CD4-positive, alpha-beta T cell (primary cell): ENCODE measurements at regions of chr18 and their contacts with region 1.

Region 1: GRCh38 chr18:49486953-49487710 is at the start of gene C18orf32:
- DNase-seq: peak; percentile 85 to 96 (median 92)
- ATAC-seq: peak; percentile 87
- H3K4me3 ChIP-seq: peak within 1 kb of the TSS; percentile 89
- H3K4me3 Mint-ChIP-seq: peak within 1 kb of the TSS; percentile 96
- H3K27ac ChIP-seq: peak within 1 kb of the TSS; percentile 84 to 89
- H3K27ac Mint-ChIP-seq: peak within 1 kb of the TSS; percentile 93
- H3K4me1 ChIP-seq: peaks cover 51% of the 10 kb centered on the region
- H3K4me1 Mint-ChIP-seq: peaks cover 66% of the 10 kb centered on the region
- H3K27me3 ChIP-seq: no peaks in the 10 kb centered on the region
- H3K27me3 Mint-ChIP-seq: no peaks in the 10 kb centered on the region
- CTCF ChIP-seq: no peak
- total RNA-seq, gene C18orf32: 38.2 to 40.1 TPM

Region 2: DNA sequence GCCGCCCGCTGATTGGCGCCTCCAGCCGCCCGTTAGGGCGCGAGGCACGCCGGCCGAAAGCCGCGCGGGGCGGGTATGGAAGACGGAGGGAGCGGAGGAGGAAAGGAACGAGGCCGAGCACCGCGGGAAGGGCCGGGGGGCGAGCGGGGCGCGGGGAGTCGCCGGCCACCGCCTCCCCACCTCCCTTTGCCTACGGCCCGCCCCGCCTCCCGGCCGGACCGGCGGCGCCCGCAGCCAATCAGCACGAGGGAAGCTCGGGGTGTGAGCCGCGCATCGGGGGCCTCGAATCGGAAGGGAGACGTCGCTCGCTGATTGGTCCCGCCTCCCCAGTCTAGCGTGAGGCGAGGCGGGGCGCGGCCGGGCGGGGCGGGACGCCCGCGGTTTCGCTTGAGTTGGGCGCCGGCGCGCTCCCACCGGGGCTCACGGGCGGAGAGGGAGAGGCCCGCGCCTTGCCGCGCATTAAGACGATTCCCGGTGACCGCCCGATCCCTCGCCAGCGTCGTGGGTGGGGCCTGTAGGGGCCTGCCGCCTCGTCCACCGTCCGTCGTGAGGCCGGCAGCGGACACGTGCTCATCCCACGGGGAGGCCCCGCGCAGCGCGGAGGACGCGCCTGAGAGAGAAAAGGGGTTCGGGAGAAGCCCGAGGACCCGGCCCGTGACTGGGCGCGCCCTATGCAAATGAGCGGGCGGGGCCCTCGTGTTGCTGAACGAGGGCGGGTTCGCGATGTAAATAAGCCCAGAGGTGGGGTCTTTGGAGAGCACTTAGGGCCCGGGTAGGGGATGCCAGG is 1556.0 kb before region 1 on chr18:
- CTCF ChIA-PET with region 1: no interaction called
- POLR2A ChIA-PET with region 1: no interaction called
- intact Hi-C with region 1: loop called in 1 of 2 experiments (anchors 10 kb)
- DNase-seq: peak; percentile 86 to 98 (median 92)
- ATAC-seq: peak; percentile 75
- H3K4me3 ChIP-seq: peak overlapping the region; percentile 56
- H3K4me3 Mint-ChIP-seq: peak overlapping the region; percentile 93
- H3K27ac ChIP-seq: peak overlapping the region; percentile 78 to 92
- H3K27ac Mint-ChIP-seq: peak overlapping the region; percentile 95
- H3K4me1 ChIP-seq: peaks cover 20% of the 10 kb centered on the region
- H3K4me1 Mint-ChIP-seq: peaks cover 45% of the 10 kb centered on the region
- H3K27me3 ChIP-seq: no peaks in the 10 kb centered on the region
- H3K27me3 Mint-ChIP-seq: no peaks in the 10 kb centered on the region
- CTCF ChIP-seq: no peak

Region 3: DNA sequence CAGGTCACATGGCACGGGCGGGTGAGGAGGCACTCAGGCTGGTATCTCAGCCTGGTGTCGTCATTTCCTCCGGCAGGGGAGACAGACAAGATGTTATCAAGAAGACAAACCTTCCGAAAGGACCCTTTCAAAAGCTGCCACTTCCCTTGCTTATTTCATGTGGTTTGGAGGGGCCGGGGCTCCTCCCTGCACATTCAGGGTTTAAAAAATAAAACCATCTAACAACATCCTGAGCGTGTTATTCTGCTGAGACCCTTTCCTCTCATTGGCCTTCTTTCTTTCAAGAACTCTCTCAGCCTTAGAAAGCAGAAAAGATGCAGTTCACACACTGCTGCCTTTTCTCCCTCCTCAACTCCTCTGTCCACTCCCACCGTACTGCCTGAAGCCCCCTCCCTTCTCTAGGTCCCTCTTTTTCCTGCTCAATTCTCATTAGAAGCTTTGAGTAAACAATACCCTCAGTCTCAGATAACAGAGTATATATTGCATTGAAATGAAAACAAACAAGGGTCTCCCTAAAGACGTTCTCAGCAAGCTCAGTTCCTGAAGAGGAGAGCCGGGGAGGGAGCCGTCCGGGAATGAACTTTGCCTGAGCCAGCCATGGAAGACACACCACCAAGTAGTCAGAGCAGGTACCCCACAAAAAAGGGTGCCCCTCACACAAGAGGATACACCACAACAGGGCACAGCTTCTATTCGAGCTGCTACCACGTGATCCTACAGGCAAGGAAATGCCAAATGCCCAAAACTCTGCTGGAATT is 546.1 kb before region 1 on chr18:
- CTCF ChIA-PET with region 1: interaction called, 3 read pairs
- POLR2A ChIA-PET with region 1: no interaction called
- intact Hi-C with region 1: loop called in 1 of 2 experiments (anchors 5 kb)
- DNase-seq: peak; percentile 71 to 97 (median 80)
- ATAC-seq: peak; percentile 83
- H3K4me3 ChIP-seq: peak overlapping the region; percentile 26
- H3K4me3 Mint-ChIP-seq: peak overlapping the region; percentile 87
- H3K27ac ChIP-seq: peak overlapping the region; percentile 51
- H3K27ac Mint-ChIP-seq: peak overlapping the region; percentile 92
- H3K4me1 ChIP-seq: peaks cover 93% of the 10 kb centered on the region
- H3K4me1 Mint-ChIP-seq: peaks cover 92% of the 10 kb centered on the region
- H3K27me3 ChIP-seq: no peaks in the 10 kb centered on the region
- H3K27me3 Mint-ChIP-seq: no peaks in the 10 kb centered on the region
- CTCF ChIP-seq: no peak

Region 4: GRCh38 chr18:48955830-48956261 is 531.3 kb before region 1 on chr18:
- CTCF ChIA-PET with region 1: no interaction called
- POLR2A ChIA-PET with region 1: no interaction called
- intact Hi-C with region 1: no loop called
- DNase-seq: peak in 3 of 14 experiments; percentile 17 to 58 (median 48)
- ATAC-seq: no peak
- H3K4me3 ChIP-seq: no peak overlapping the region
- H3K4me3 Mint-ChIP-seq: no peak overlapping the region
- H3K27ac ChIP-seq: peak overlapping the region in 1 of 2 donors; percentile 11
- H3K27ac Mint-ChIP-seq: peak overlapping the region; percentile 74
- H3K4me1 ChIP-seq: peaks cover 33% of the 10 kb centered on the region
- H3K4me1 Mint-ChIP-seq: peaks cover 30% of the 10 kb centered on the region
- H3K27me3 ChIP-seq: no peaks in the 10 kb centered on the region
- H3K27me3 Mint-ChIP-seq: no peaks in the 10 kb centered on the region
- CTCF ChIP-seq: no peak

Region 5: GRCh38 chr18:49476664-49477411 is 10.3 kb before region 1 on chr18:
- CTCF ChIA-PET with region 1: no interaction called
- POLR2A ChIA-PET with region 1: interaction called, 17 read pairs
- intact Hi-C with region 1: no loop called
- DNase-seq: peak in 1 of 14 experiments; percentile 27
- ATAC-seq: no peak
- H3K4me3 ChIP-seq: no peak overlapping the region
- H3K4me3 Mint-ChIP-seq: no peak overlapping the region
- H3K27ac ChIP-seq: no peak overlapping the region
- H3K27ac Mint-ChIP-seq: peak overlapping the region; percentile 30
- H3K4me1 ChIP-seq: no peaks in the 10 kb centered on the region
- H3K4me1 Mint-ChIP-seq: peaks cover 14% of the 10 kb centered on the region
- H3K27me3 ChIP-seq: no peaks in the 10 kb centered on the region
- H3K27me3 Mint-ChIP-seq: no peaks in the 10 kb centered on the region
- CTCF ChIP-seq: no peak

Region 6: DNA sequence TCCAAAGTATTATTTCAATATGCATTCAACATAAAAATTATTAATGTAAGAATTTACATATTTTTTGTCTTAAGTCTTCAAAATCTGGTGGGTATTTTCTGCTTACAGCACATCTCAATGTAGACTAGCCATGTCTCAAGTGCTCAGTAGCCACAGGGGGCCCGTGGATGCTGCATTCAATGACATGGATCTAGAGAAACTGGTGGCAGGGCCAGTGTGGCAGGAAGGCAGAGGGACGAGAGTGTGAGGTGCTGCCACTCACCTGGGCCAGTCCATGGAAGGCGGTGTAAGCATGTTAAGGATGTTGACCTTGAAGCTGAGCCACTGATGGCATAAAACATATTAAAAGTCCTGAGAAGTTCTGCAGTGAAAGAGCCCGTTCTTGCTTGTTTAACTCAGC is 68.5 kb after region 1 on chr18:
- CTCF ChIA-PET with region 1: no interaction called
- POLR2A ChIA-PET with region 1: no interaction called
- intact Hi-C with region 1: no loop called
- DNase-seq: no peak
- ATAC-seq: no peak
- H3K4me3 ChIP-seq: no peak overlapping the region
- H3K4me3 Mint-ChIP-seq: no peak overlapping the region
- H3K27ac ChIP-seq: no peak overlapping the region
- H3K27ac Mint-ChIP-seq: no peak overlapping the region
- H3K4me1 ChIP-seq: peaks cover 3% of the 10 kb centered on the region
- H3K4me1 Mint-ChIP-seq: peaks cover 6% of the 10 kb centered on the region
- H3K27me3 ChIP-seq: peaks cover 14 to 22% of the 10 kb centered on the region in 2 experiments
- H3K27me3 Mint-ChIP-seq: peaks cover 49% of the 10 kb centered on the region
- CTCF ChIP-seq: no peak

Region 7: DNA sequence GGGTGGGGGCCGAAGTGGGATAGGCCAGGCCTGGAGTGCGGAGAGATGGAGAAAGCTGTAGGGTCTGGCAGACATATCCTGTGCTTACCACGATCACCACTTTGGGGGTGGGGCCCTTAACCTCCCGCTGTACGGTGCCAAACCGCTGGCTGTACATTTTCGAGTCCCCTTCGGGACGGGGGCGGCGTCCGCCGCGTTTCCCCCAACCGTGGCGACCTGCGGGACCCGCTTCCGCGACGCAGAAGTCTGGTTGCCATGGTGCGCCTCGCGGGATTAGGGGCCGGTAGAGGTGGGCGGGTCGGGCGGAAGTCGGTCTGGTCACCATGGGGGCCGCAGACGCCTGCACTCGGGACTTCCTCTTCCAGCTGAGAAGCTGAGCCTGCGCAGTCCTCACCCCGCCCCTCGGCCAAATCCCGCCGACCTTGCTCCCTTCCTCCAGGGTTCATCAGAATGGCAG is 779.1 kb after region 1 on chr18 and contains the start of gene CFAP53:
- CTCF ChIA-PET with region 1: no interaction called
- POLR2A ChIA-PET with region 1: interaction called, 4 read pairs
- intact Hi-C with region 1: loop called in 1 of 2 experiments (anchors 2 kb)
- DNase-seq: peak in 13 of 14 experiments; percentile 54 to 92 (median 80)
- ATAC-seq: peak; percentile 77
- H3K4me3 ChIP-seq: peak within 1 kb of the TSS; percentile 66
- H3K4me3 Mint-ChIP-seq: peak within 1 kb of the TSS; percentile 93
- H3K27ac ChIP-seq: peak within 1 kb of the TSS; percentile 13 to 64
- H3K27ac Mint-ChIP-seq: peak within 1 kb of the TSS; percentile 45
- H3K4me1 ChIP-seq: peaks cover 25% of the 10 kb centered on the region
- H3K4me1 Mint-ChIP-seq: peaks cover 30% of the 10 kb centered on the region
- H3K27me3 ChIP-seq: no peaks in the 10 kb centered on the region
- H3K27me3 Mint-ChIP-seq: no peaks in the 10 kb centered on the region
- CTCF ChIP-seq: no peak
- total RNA-seq, gene CFAP53: 0.33 to 0.47 TPM

Region 8: DNA sequence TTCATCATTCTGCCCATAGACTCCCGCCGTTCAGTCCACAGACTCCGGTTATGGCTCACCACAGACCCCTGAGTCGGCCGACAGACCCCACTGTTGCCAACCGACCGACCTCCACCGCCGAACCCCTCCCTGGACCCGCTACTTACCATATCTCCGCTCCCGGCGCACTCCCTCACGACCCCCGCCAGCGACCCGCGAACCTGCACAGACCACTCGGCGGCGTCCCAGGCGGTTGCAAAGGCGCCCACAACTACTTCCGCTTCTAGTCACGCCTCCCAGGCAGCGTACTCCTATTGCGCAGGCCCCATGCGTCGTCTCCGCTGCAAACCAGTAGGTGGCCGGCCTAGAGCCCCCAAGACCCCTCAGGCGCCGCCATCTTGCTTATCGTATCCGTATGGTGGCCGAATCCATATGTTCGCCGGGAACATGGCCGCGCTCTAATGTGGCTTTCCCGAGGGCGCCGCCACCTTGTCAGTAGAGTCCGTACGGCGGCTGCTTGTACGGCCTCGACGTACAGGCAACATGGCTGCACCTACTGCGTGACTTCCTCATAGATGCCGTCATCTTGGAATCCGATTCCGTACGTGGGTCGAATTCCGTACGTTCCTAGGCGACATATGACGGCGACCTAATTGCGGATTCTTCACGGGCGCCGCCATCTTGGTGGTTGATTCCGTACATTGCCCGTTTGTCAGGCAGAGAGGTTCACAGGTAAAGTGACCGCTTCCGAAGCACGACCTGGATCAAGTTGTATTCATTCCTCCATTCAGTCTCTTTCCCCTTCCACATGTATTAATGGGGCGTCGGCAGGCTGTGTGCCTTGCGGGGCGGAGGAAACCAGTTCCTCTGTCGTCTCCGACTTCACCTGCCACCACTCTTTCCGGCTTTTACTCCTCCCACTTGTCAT is 800.6 kb after region 1 on chr18 and contains the start of gene CXXC1:
- CTCF ChIA-PET with region 1: no interaction called
- POLR2A ChIA-PET with region 1: no interaction called
- intact Hi-C with region 1: loop called (anchors 5 kb)
- DNase-seq: peak; percentile 96 to 99 (median 97)
- ATAC-seq: peak; percentile 85
- H3K4me3 ChIP-seq: peak within 1 kb of the TSS; percentile 85
- H3K4me3 Mint-ChIP-seq: peak within 1 kb of the TSS; percentile 96
- H3K27ac ChIP-seq: peak within 1 kb of the TSS; percentile 72 to 93
- H3K27ac Mint-ChIP-seq: peak within 1 kb of the TSS; percentile 98
- H3K4me1 ChIP-seq: peaks cover 24% of the 10 kb centered on the region
- H3K4me1 Mint-ChIP-seq: peaks cover 27% of the 10 kb centered on the region
- H3K27me3 ChIP-seq: no peaks in the 10 kb centered on the region
- H3K27me3 Mint-ChIP-seq: no peaks in the 10 kb centered on the region
- CTCF ChIP-seq: peak; percentile 61
- total RNA-seq, gene CXXC1: 120 to 128 TPM

Region 9: DNA sequence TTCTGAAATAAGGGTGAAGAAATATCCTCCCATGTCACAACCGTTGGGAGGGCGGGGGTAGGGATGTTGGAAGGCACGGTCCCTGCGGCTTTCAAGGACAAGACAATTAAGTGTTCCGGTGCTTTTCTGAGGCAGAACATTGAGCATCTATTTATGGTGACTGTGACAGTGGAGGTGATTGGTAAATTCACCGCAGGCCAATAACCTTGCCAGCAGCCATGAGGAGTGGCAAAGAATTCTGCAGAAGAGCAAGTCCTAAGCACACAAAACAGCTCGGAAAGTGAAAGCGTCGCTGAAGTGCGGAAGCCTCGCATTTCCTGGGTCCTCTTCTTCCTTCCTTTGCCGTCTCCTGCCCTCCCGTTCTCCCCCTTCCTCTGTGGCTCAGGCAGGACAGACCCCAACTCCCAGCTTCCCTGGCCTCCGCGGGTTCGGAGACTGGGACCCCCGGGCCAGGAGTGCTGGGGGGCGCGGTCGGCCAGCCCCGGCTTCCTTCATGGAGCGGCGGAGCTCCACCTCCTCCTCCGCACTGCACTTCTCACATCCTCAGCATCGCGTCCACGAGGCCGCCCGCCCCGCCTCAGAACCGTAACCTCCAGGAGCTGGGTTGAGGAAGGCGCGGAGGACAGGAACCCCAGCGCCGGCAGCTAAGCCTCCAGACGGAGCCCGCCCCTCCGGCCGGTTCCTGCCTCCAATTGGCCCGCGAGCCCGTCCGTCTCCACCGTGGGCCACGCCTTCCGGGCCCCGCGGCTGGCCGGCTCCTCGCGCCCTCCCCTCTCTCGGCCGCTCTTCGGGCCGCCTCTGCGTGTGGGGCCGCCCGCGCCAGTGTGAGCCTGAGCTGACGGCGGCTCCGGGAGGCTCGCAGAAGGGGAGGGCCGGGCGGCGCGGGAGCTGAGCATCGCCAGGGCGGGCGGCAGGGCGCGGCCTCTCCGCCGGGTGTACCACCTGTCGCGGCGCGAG is 1391.5 kb after region 1 on chr18 and contains the start of gene ME2:
- CTCF ChIA-PET with region 1: no interaction called
- POLR2A ChIA-PET with region 1: no interaction called
- intact Hi-C with region 1: loop called in 1 of 2 experiments (anchors 10 kb)
- DNase-seq: peak; percentile 77 to 94 (median 88)
- ATAC-seq: peak; percentile 90
- H3K4me3 ChIP-seq: peak within 1 kb of the TSS; percentile 93
- H3K4me3 Mint-ChIP-seq: peak within 1 kb of the TSS; percentile 98
- H3K27ac ChIP-seq: peak within 1 kb of the TSS; percentile 95 to 97
- H3K27ac Mint-ChIP-seq: peak within 1 kb of the TSS; percentile 97
- H3K4me1 ChIP-seq: peaks cover 32% of the 10 kb centered on the region
- H3K4me1 Mint-ChIP-seq: peaks cover 28% of the 10 kb centered on the region
- H3K27me3 ChIP-seq: no peaks in the 10 kb centered on the region
- H3K27me3 Mint-ChIP-seq: peaks cover 6% of the 10 kb centered on the region
- CTCF ChIP-seq: no peak
- total RNA-seq, gene ME2: 15.6 to 16.1 TPM